Dendritic cell treated with granulocyte-macrophage colony-stimulating factor and Interleukin-4, amounts not matched to agents 40 ng/mL and 50 ng/mL, for 4 days (primary cell): ENCODE measurements at regions of chr19 and their contacts with region 1.

Region 1: DNA sequence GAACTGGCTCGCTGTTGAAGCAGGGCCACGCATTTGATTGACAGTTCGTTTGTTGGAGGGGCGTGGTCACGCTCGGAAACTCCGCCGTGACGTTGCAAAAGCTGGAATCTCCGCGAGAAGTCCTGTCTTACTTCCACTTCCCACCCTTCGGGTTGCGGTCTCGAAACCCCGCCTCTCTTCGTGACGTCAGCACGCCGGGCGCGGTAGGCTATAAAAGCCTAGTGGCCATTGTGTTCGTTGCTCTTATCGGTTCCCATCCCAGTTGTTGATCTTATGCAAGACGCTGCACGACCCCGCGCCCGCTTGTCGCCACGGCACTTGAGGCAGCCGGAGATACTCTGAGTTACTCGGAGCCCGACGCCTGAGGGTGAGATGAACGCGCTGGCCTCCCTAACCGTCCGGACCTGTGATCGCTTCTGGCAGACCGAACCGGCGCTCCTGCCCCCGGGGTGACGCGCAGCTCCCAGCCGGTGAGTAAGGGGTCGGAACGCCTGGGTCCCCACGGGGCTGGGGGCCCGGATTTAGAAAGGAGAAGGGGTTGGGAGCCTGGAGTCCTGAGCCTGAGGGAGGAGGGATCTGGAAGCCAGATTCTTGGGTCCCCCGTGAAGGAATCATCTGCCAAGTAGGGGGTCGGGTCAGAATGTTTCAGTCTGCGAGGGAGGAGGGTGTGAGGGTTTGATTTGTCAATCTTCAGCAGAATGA is at the start of gene PPP1R15A:
- H3K4me3 Mint-ChIP-seq: peak within 1 kb of the TSS; percentile 100
- H3K27ac Mint-ChIP-seq: peak within 1 kb of the TSS; percentile 100
- H3K4me1 Mint-ChIP-seq: peaks cover 52% of the 10 kb centered on the region
- H3K27me3 Mint-ChIP-seq: peaks cover 7% of the 10 kb centered on the region

Region 2: GRCh38 chr19:48837680-48838083 is 34.7 kb before region 1 on chr19:
- intact Hi-C with region 1: loop called (anchors 2 kb)
- H3K4me3 Mint-ChIP-seq: no peak overlapping the region
- H3K27ac Mint-ChIP-seq: no peak overlapping the region
- H3K4me1 Mint-ChIP-seq: peaks cover 38% of the 10 kb centered on the region
- H3K27me3 Mint-ChIP-seq: peaks cover 31% of the 10 kb centered on the region

Region 3: DNA sequence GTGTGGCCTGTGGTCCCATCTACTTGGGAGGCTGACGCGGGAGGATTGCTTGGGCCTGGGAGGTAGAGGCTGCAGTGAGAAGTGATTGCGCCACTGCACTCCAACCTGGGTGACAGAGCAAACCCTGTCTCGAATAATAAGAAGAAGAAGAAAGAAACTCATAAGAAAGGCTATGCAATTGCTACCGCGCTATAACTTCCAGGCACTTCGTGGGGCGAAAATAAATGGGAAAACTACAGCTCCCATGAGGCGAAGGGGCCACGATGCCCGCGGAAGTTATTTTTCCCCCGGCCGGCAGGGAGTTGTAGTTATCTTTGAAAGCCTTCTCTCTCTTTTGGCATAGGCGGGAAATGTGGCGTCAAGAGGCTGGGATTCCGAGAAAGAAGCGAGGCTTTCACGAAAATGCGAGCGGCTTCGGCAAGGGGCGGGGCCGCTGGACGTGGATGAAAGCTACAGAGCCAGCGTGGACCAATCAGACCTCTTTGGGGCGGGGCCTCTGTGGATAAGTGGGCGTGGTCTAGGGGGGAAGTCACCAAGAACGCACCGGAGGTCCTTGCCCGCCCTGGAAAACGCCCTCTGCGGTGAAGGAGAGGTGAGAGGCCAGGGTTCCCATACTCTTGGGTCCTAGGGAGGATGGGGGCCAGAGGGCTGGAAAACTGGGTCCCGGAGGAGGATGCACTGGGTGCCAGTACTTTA is 27.6 kb after region 1 on chr19 and contains the start of gene NUCB1:
- intact Hi-C with region 1: loop called (anchors 1 kb)
- H3K4me3 Mint-ChIP-seq: peak within 1 kb of the TSS; percentile 100
- H3K27ac Mint-ChIP-seq: peak within 1 kb of the TSS; percentile 99
- H3K4me1 Mint-ChIP-seq: peaks cover 51% of the 10 kb centered on the region
- H3K27me3 Mint-ChIP-seq: peaks cover 28% of the 10 kb centered on the region

Region 4: DNA sequence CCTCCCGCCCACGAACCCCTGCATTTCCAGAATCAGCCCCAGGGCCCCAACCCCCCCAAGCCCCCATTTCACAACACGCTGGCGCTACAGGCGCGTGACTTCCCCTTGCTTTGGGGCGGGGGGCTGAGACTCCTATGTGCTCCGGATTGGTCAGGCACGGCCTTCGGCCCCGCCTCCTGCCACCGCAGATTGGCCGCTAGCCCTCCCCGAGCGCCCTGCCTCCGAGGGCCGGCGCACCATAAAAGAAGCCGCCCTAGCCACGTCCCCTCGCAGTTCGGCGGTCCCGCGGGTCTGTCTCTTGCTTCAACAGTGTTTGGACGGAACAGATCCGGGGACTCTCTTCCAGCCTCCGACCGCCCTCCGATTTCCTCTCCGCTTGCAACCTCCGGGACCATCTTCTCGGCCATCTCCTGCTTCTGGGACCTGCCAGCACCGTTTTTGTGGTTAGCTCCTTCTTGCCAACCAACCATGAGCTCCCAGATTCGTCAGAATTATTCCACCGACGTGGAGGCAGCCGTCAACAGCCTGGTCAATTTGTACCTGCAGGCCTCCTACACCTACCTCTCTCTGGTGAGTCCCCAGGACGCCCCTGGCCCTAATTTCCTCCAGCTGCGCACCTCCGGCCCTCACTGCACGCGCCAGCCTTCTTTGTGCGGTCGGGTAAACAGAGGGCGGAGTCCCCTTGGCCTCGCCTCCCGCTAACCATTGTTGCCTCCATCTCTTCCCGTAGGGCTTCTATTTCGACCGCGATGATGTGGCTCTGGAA is 92.9 kb after region 1 on chr19 and contains the start of gene FTL:
- intact Hi-C with region 1: loop called (anchors 1 kb)
- H3K4me3 Mint-ChIP-seq: peak within 1 kb of the TSS; percentile 100
- H3K27ac Mint-ChIP-seq: peak within 1 kb of the TSS; percentile 98
- H3K4me1 Mint-ChIP-seq: peaks cover 72% of the 10 kb centered on the region
- H3K27me3 Mint-ChIP-seq: no peaks in the 10 kb centered on the region

Region 5: DNA sequence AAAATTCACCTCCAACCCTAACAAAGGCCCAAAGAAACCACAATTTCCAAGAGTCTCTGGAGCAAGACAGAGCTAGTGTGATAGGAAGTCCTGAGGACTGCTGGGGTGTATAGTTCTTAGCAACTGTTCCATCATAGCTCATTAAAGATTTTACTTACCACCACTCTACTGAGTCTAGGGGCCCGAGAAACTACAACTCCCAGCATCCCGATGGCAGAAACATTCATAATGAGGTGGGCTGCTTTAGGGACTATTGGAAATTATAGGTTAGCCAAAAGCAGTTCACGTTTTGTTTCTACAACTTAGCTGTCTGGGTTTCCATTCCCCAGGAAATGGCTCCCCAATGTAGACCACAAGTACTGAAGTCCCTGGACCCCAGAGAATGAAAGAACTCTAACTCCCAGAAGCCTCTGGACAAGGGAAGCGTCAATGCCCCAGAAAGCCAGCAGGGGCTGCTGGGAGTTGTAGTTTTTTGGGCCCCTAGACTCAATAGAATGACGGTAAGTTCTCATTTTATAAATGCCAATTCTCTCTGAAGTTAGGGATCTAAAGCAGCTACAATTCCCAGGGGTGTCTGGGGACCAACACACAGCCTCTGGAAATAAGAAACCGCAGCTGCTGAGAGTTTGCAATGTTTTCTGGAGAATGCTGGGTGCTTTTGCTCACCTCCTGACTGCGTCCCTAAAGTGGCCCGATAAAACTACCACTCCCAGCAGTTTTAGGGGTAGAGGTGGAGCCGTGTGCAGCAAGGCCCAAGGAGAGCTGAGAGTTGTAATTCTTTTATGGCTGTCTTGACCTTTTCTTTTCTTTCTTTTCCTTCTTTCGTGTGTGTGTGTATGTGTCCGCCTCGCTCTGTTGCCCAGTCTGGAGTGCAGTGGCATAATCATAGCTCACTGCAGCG is 103.9 kb after region 1 on chr19:
- intact Hi-C with region 1: no loop called
- H3K4me3 Mint-ChIP-seq: no peak overlapping the region
- H3K27ac Mint-ChIP-seq: no peak overlapping the region
- H3K4me1 Mint-ChIP-seq: peaks cover 5% of the 10 kb centered on the region
- H3K27me3 Mint-ChIP-seq: no peaks in the 10 kb centered on the region

Region 6: GRCh38 chr19:49502866-49503581 is 630.7 kb after region 1 on chr19:
- intact Hi-C with region 1: no loop called
- H3K4me3 Mint-ChIP-seq: no peak overlapping the region
- H3K27ac Mint-ChIP-seq: no peak overlapping the region
- H3K4me1 Mint-ChIP-seq: peaks cover 44% of the 10 kb centered on the region
- H3K27me3 Mint-ChIP-seq: peaks cover 6% of the 10 kb centered on the region